ENCODE measurements at regions of chr1 and their contacts with region 1.

Region 1: DNA sequence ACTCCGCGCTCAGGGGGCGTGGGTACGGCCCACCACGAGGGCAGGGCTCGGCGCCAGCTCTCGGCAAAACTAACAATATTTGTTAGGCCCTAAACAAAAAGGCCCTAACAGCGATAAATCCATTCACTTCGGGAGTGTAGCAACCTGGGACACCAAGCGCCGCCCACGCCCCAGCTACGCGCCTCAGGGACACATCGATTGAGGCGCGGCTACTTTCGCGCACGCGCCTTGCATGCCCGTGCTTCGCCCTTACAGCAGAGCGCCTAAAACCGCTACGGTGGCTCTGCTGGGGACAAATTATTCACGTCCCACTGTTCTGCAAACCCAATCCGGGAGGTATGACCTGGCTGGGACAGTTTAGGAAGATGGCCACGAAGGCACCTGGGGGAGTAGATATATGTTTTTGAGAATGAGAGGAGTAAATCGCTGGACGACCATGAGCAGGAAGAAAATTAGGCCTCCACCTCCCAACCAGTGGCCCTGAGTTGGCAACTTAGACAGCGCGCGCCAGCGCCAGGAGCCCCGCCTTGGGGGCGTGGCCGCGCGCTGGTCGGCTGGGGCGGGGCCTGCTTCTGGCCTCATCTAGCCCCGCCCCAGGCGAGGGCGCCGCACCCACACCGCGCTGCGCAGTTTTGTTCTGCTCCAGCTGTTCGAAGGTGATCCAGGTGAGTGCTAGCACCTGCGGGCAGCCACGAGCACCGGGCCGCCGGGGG is at the start of gene MGST3:
- DNase-seq: peak; percentile 95 to 97 (median 96)
- ATAC-seq: peak; percentile 95 to 98 (median 97)
- H3K4me3 ChIP-seq: peak within 1 kb of the TSS; percentile 63 to 96 (median 89)
- H3K27ac ChIP-seq: peak within 1 kb of the TSS; percentile 69 to 99 (median 93)
- H3K4me1 ChIP-seq: peaks cover 4 to 49% (median 35%) of the 10 kb centered on the region in 12 donors
- H3K27me3 ChIP-seq: no peaks in the 10 kb centered on the region
- CTCF ChIP-seq: no peak
- POLR2A ChIP-seq: peak; percentile 92 to 94
- total RNA-seq, gene MGST3: 408 to 1,027 (median 747) TPM

Region 2: GRCh38 chr1:165560883-165561656 is 69.7 kb before region 1 on chr1:
- intact Hi-C with region 1: no loop called
- DNase-seq: peak in 3 of 5 donors; percentile 39 to 55 (median 53)
- ATAC-seq: peak; percentile 64 to 78 (median 74)
- H3K4me3 ChIP-seq: no peak overlapping the region
- H3K27ac ChIP-seq: peak overlapping the region in 5 of 12 donors; percentile 38 to 70 (median 56)
- H3K4me1 ChIP-seq: peaks cover 0 to 25% (median 12%) of the 10 kb centered on the region in 12 donors
- H3K27me3 ChIP-seq: peaks cover 0 to 5% (median 0%) of the 10 kb centered on the region in 9 donors
- CTCF ChIP-seq: no peak
- POLR2A ChIP-seq: no peak

Region 3: DNA sequence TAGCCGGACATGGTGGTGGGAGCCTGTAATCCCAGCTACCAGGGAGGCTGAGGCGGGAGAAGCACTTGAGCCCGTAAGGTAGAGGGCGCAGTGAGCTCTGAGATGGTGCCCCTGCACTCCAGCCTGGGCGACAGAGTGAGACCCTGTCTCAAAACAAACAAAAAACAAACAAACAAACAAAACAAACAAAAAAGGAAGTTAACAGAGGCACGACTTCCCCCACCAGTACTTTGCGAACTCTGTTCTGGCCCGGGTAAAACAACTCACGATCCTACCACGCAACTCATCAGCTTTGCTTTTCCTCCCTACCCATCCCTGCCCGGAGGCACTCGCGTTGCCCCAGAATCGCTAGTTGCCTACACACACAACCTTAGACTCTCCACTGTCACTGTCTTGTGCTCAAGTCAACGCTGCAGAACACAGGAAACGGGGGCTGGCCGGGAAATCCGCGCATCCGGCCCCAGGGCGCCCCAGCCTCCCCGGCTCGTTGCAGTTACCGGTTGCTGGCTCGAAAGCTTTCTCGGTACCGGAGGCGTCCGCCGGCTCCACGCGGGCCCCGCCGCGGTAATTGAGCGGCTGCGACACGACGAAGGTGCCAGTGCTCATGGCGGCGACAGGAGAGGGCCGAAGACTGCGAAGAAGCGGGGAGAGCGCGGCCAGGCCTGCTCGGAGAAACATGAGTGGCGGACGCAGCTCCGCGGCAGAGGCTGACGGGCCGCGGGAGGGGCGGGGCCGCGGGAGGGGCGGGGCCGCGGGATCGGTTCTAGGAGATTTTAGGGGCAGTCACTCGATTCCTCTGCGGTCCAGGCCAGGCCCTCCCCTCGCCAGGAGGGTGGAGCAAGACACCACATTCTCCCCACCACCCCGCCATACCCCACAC is 67.3 kb after region 1 on chr1 and contains the start of gene ALDH9A1:
- intact Hi-C with region 1: loop called in 7 of 10 experiments (anchors 2 to 10 kb)
- DNase-seq: peak; percentile 89 to 95 (median 92)
- ATAC-seq: peak; percentile 94 to 98 (median 96)
- H3K4me3 ChIP-seq: peak within 1 kb of the TSS; percentile 41 to 89 (median 70)
- H3K27ac ChIP-seq: peak within 1 kb of the TSS; percentile 80 to 98 (median 94)
- H3K4me1 ChIP-seq: peaks cover 0 to 31% (median 19%) of the 10 kb centered on the region in 12 donors
- H3K27me3 ChIP-seq: no peaks in the 10 kb centered on the region
- CTCF ChIP-seq: peak in 9 of 12 donors; percentile 7 to 52 (median 41)
- POLR2A ChIP-seq: peak in 1 of 2 donors; percentile 87
- total RNA-seq, gene ALDH9A1: 51.1 to 77.0 (median 66.1) TPM